Breast epithelium (tissue), 4 donors: ENCODE measurements at regions of chr19 and their contacts with region 1.

Region 1: GRCh38 chr19:18058208-18059030 is 28.3 kb downstream of the IL12RB1 start:
- DNase-seq: peak; percentile 63 to 83
- H3K4me3 ChIP-seq: peak overlapping the region; percentile 11 to 29 (median 26)
- H3K27ac ChIP-seq: peak overlapping the region; percentile 61 to 84
- H3K4me1 ChIP-seq: no peaks in the 10 kb centered on the region
- H3K27me3 ChIP-seq: no peaks in the 10 kb centered on the region
- CTCF ChIP-seq: peak; percentile 94 to 99 (median 97)
- POLR2A ChIP-seq: no peak

Region 2: GRCh38 chr19:18007044-18007916 is 51.1 kb before region 1 on chr19:
- intact Hi-C with region 1: loop called (anchors 5 kb)
- DNase-seq: peak; percentile 71 to 80
- H3K4me3 ChIP-seq: peak overlapping the region; percentile 62 to 75 (median 65)
- H3K27ac ChIP-seq: peak overlapping the region; percentile 88 to 91
- H3K4me1 ChIP-seq: no peaks in the 10 kb centered on the region
- H3K27me3 ChIP-seq: no peaks in the 10 kb centered on the region
- CTCF ChIP-seq: peak; percentile 90 to 99 (median 95)
- POLR2A ChIP-seq: no peak